Posterior cingulate gyrus (tissue), 11 donors: ENCODE measurements at regions of chr19 and their contacts with region 1.

Region 1: GRCh38 chr19:43651758-43652545 is 12.3 kb upstream of the CADM4 start:
- DNase-seq: peak; percentile 47 to 94 (median 72)

Region 2: DNA sequence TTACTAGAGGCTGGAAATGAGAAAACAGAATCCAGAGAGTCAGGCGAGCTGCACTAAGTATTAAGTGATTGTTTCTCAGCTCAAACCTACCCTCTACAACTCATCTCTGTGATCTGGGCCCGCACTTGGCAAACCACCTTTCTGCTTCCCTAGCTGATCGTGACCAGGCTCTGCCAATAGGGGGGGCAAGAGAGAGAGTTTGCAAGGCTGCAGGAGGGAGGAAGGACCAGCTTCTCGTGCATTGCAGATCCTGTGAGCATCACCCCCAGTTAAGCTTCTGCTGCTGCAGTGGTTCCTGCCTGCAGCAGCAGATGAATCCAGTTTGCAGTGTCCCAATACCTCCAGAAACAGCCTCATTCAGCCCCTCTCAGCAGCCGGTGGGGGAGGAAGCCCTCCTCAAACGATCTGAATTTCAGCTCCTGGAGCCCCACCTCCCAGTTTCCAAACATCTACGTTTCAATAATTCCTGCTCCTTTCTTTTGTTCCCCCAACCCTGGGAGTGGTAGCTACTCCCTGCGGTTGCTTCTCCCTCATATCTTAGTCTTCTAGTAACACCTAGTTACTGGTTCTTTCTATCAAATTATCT is 96.7 kb before region 1 on chr19:
- intact Hi-C with region 1: loop called (anchors 2 kb)
- DNase-seq: peak; percentile 71 to 96 (median 85)

Region 3: DNA sequence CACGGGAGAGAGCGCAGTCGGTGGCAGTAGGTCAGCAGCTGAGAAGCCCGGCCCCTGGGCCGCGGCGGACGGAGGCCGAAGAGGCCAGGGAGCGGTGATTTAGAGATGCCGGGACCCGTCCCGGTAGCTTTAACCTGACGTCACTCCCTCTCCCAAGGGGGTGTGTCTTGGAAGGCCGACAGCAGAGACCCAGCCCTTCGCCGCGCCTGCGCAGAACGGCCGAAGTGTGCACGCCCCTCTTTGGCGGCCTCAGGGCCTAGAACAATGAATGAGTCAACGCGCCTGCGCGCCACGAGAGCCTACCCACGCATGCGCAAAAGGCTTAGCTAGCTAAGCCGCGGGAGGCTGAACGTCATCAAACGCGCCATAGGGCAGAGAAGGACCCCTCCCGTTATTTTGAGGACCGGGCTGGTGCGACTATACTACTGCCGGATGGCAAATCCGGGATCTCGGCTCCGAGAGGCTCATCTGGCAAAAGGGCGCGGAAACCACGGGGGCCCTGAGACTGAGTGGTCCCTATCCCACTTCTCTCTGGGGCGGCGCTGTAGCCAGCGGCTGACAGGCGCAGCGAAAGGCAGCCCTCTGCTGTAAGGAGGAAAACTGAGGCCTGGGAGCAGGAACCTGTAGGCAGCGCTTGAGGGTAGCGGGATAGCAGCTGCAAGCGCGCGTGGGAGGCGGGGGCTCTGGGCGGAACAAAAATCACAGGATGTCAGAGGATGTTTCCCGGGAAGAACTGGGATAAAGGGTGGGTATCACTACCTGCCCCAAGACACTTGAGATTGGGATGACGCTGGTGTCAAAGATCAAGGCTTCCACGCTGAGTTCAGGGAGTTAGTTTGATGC is 55.7 kb before region 1 on chr19 and contains the starts of genes IRGQ and ZNF576:
- intact Hi-C with region 1: loop called (anchors 2 kb)
- DNase-seq: peak; percentile 98 to 100 (median 100)

Region 4: GRCh38 chr19:43619262-43620060 is 32.5 kb before region 1 on chr19 and contains the start of gene ZNF428:
- intact Hi-C with region 1: loop called (anchors 5 kb)
- DNase-seq: peak; percentile 83 to 99 (median 93)

Region 5: GRCh38 chr19:43639519-43640423 is 12.2 kb before region 1 on chr19 and contains the start of gene CADM4:
- intact Hi-C with region 1: no loop called
- DNase-seq: peak in 6 of 10 donors; percentile 51 to 93 (median 78)

Region 6: DNA sequence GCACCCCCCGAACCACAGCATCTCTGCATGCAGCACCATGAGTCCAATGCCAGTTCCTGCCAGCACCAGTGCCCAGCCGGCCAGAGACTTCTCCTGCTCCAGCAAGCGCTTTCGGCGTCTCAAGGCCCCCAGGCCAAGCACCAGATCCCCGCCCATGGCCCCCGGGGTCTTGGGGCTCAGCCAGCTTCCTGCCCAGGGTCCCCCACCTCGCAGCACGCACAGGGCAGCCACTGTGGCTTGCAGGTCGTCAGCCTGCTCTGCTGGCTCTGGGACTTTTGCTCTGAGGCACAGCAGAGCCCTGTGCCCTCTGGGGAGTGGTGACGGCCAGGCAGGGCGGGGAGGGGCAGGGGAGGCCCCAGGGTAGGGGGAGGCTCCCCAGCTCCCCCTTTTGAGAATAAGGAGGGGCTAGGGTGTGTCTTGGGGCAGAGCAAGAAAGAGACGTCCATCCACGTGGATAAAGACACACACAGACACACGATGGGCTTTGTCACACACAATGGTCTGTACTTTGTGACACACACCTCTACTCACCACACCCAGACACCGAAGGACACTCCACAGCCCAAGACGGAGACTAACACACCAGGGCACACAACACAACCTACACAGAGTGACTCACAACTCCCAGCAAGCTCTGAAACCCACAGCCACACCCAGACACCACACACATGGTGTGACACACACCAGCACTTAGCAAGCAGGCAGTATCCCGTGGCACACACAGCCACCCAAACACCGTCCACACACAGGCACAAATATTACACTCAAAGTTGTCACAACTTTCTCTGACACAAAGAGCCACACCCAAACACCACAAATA is 129.0 kb after region 1 on chr19 and contains the start of gene KCNN4:
- intact Hi-C with region 1: no loop called
- DNase-seq: peak in 1 of 10 donors; percentile 79